Caco-2 (cell line): ENCODE measurements at regions of chr7 and their contacts with region 1.

Region 1: GRCh38 chr7:142939226-142939910 is at the start of gene LLCFC1:
- DNase-seq: peak; percentile 56 to 60
- H3K4me3 ChIP-seq: no peak within 1 kb of the TSS
- H3K4me3 Mint-ChIP-seq: no peak within 1 kb of the TSS
- H3K27ac Mint-ChIP-seq: no peak within 1 kb of the TSS
- H3K4me1 ChIP-seq: no peaks in the 10 kb centered on the region
- H3K4me1 Mint-ChIP-seq: peaks cover 18% of the 10 kb centered on the region
- H3K27me3 ChIP-seq: no peaks in the 10 kb centered on the region
- H3K27me3 Mint-ChIP-seq: no peaks in the 10 kb centered on the region
- CTCF ChIP-seq: peak; percentile 43 to 62
- total RNA-seq, gene LLCFC1: not detected in 2 replicates

Region 2: DNA sequence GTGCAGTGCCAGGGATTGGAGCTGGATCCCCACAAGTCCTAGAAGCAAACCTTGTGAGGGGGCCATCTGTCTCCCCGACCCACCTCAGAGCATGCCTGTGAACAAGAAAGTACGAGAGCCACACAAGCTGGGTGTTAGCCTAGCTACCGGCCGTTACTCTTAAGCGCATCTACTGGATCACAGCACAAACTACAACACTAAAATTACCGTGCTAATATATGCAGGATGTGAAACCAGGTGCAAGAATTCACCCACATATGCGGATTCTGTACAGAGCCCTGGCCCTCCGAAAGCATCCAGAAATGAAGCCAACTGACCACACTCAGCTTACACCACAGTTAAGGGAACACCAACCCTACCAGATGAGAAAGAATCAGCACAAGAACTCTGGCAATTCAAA is 206.1 kb before region 1 on chr7:
- CTCF ChIA-PET with region 1: no interaction called
- POLR2A ChIA-PET with region 1: no interaction called
- intact Hi-C with region 1: no loop called
- DNase-seq: no peak
- H3K4me3 ChIP-seq: no peak overlapping the region
- H3K4me3 Mint-ChIP-seq: no peak overlapping the region
- H3K27ac Mint-ChIP-seq: no peak overlapping the region
- H3K4me1 ChIP-seq: no peaks in the 10 kb centered on the region
- H3K4me1 Mint-ChIP-seq: no peaks in the 10 kb centered on the region
- H3K27me3 ChIP-seq: no peaks in the 10 kb centered on the region
- H3K27me3 Mint-ChIP-seq: peaks cover 19% of the 10 kb centered on the region
- CTCF ChIP-seq: no peak

Region 3: DNA sequence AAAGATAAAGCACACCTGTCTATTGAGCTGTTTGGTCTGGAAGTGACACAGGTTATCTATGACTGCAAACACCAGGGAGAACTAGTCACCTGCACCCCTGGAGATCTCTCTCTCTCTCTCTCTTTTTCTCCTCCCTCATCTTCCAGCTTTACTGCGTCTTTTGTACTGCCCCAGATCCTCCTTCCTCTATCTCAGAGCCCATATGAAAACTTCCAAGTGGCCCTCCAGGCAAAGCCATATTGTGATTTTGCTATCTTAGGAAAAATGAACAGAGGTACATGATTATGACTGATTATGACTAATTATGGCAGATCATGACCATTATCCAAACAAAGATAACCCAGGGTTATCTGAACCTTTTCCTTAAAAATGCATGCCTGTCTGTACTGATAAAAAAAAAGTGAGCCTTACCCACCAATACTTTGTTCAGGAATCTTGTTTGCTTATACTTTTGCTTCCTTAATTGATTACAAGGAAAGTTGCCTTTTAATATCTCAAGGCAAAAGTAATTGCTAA is 97.1 kb before region 1 on chr7:
- CTCF ChIA-PET with region 1: no interaction called
- POLR2A ChIA-PET with region 1: no interaction called
- intact Hi-C with region 1: no loop called
- DNase-seq: no peak
- H3K4me3 ChIP-seq: no peak overlapping the region
- H3K4me3 Mint-ChIP-seq: no peak overlapping the region
- H3K27ac Mint-ChIP-seq: no peak overlapping the region
- H3K4me1 ChIP-seq: peaks cover 16% of the 10 kb centered on the region
- H3K4me1 Mint-ChIP-seq: peaks cover 13% of the 10 kb centered on the region
- H3K27me3 ChIP-seq: no peaks in the 10 kb centered on the region; the same call in 1 of the 2 replicates
- H3K27me3 Mint-ChIP-seq: peaks cover 2% of the 10 kb centered on the region
- CTCF ChIP-seq: no peak

Region 4: DNA sequence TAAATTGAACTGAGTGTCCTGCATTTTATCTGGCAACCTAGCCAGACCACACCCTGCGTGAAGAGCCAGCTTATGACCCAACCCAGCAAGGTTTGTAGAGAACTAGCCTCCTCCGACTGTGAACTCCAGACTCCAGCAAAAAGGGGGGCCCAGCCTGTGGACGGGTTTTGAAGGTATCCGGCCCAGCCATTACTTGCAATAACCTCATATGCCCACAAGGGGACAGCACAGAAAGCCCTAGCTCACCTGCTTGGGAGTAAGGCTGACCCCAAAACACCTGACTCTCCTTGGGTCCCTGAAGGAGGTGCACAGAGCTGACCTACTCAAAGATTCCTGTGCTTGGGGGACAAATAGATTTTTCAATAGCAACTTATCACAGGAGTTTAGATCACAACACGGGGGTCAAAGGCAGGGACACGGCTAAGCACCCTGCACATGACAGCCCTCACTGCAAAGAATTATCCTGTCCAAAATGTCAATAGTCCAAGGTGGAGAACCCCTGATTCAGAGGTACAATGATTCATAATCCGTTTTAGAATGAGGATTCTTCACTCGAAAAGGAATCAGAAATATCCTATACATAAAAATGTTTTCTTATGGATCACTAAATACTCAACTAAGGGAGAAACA is 58.4 kb before region 1 on chr7:
- CTCF ChIA-PET with region 1: no interaction called
- POLR2A ChIA-PET with region 1: no interaction called
- intact Hi-C with region 1: loop called (anchors 1 kb)
- DNase-seq: peak; percentile 53 to 54
- H3K4me3 ChIP-seq: no peak overlapping the region
- H3K4me3 Mint-ChIP-seq: no peak overlapping the region
- H3K27ac Mint-ChIP-seq: no peak overlapping the region
- H3K4me1 ChIP-seq: peaks cover 20% of the 10 kb centered on the region
- H3K4me1 Mint-ChIP-seq: no peaks in the 10 kb centered on the region
- H3K27me3 ChIP-seq: no peaks in the 10 kb centered on the region
- H3K27me3 Mint-ChIP-seq: no peaks in the 10 kb centered on the region
- CTCF ChIP-seq: peak; percentile 91 to 92